ENCODE measurements at regions of chr5 and their contacts with region 1.

Region 1: DNA sequence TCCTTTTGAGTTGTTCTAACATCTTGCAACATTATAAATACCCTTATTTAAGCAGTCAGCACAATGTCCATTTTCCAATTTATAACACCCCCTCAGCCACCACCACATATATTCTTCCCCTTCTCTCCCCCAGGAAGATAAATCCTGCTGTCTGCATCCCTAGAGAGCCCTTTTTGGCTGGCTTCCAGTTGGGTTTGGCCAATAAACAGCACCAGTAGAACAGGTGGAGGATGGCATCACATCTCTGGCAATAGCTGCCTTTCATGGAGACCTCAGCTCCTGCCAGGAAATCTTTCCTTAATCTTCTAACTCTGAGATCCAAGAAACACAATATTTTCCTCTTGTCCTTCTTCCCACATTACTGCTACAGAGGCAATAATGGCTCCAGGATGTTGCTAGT is 53.7 kb downstream of the TRIM36 start:
- DNase-seq: no peak
- ATAC-seq: no peak
- H3K4me3 ChIP-seq: no peak overlapping the region
- H3K4me3 Mint-ChIP-seq: no peak overlapping the region
- H3K27ac ChIP-seq: no peak overlapping the region
- H3K27ac Mint-ChIP-seq: no peak overlapping the region
- H3K4me1 ChIP-seq: no peaks in the 10 kb centered on the region
- H3K4me1 Mint-ChIP-seq: no peaks in the 10 kb centered on the region
- H3K27me3 ChIP-seq: peaks cover 0 to 9% (median 3%) of the 10 kb centered on the region in 4 experiments
- H3K27me3 Mint-ChIP-seq: peaks cover 52% of the 10 kb centered on the region
- CTCF ChIP-seq: no peak

Region 2: DNA sequence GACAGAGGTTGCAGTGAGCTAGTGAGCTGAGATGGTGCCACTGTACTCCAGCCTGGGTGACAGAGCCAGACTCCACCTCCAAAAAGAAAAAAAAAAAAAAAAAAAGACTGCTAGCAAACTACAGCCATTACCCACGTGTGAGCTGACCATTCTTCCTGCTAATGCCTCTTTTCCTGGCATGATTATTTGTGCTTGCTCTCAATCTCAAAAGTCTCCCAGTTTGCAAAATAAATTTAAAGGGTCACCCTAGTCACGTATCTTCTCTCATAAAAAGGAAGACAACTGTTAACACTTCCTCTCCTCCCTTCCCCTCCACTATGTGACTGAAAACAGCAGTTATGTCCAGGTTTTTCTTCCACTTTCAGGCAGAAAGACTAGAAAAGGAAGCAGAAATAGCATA is 16.5 kb after region 1 on chr5:
- CTCF ChIA-PET with region 1: no interaction called
- POLR2A ChIA-PET with region 1: no interaction called
- intact Hi-C with region 1: no loop called
- DNase-seq: no peak
- ATAC-seq: no peak
- H3K4me3 ChIP-seq: no peak overlapping the region
- H3K4me3 Mint-ChIP-seq: no peak overlapping the region
- H3K27ac ChIP-seq: no peak overlapping the region
- H3K27ac Mint-ChIP-seq: no peak overlapping the region
- H3K4me1 ChIP-seq: no peaks in the 10 kb centered on the region
- H3K4me1 Mint-ChIP-seq: peaks cover 2% of the 10 kb centered on the region
- H3K27me3 ChIP-seq: peaks cover 0 to 4% (median 0%) of the 10 kb centered on the region in 4 experiments
- H3K27me3 Mint-ChIP-seq: peaks cover 15% of the 10 kb centered on the region
- CTCF ChIP-seq: no peak

Region 3: GRCh38 chr5:115147052-115147451 is 31.1 kb after region 1 on chr5:
- CTCF ChIA-PET with region 1: no interaction called
- POLR2A ChIA-PET with region 1: no interaction called
- intact Hi-C with region 1: no loop called
- DNase-seq: no peak
- ATAC-seq: no peak
- H3K4me3 ChIP-seq: no peak overlapping the region
- H3K4me3 Mint-ChIP-seq: no peak overlapping the region
- H3K27ac ChIP-seq: no peak overlapping the region
- H3K27ac Mint-ChIP-seq: no peak overlapping the region
- H3K4me1 ChIP-seq: no peaks in the 10 kb centered on the region
- H3K4me1 Mint-ChIP-seq: no peaks in the 10 kb centered on the region
- H3K27me3 ChIP-seq: peaks cover 0 to 13% (median 1%) of the 10 kb centered on the region in 4 experiments
- H3K27me3 Mint-ChIP-seq: peaks cover 14% of the 10 kb centered on the region
- CTCF ChIP-seq: no peak

Region 4: DNA sequence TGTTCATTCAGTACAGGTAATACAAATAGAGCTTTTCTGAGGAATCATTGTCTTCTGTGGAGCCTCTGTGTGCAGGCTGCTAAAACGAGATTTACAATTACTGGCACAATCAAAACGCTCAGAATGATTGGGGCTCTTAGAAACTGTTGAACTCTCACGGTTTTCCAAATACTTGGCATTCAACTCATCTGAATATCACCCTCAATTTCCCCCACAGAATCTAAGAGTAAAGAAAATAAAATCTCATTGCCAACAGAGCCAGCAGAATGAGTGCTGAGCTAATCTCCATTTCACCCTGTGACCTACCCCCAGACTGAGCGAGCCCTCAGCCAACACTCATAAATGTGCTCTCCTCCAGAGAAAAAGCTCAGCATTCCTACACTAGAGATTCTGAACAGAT is 545.1 kb after region 1 on chr5:
- CTCF ChIA-PET with region 1: no interaction called
- POLR2A ChIA-PET with region 1: interaction called, 11 read pairs
- intact Hi-C with region 1: no loop called
- DNase-seq: no peak
- ATAC-seq: no peak
- H3K4me3 ChIP-seq: no peak overlapping the region
- H3K4me3 Mint-ChIP-seq: no peak overlapping the region
- H3K27ac ChIP-seq: no peak overlapping the region
- H3K27ac Mint-ChIP-seq: no peak overlapping the region
- H3K4me1 ChIP-seq: no peaks in the 10 kb centered on the region
- H3K4me1 Mint-ChIP-seq: no peaks in the 10 kb centered on the region
- H3K27me3 ChIP-seq: peaks cover 0 to 13% (median 4%) of the 10 kb centered on the region in 4 experiments
- H3K27me3 Mint-ChIP-seq: peaks cover 31% of the 10 kb centered on the region
- CTCF ChIP-seq: no peak

Measured in B cell (primary cell).